Ascending aorta (tissue), 2 donors: ENCODE measurements at regions of chr2 and their contacts with region 1.

Region 1: DNA sequence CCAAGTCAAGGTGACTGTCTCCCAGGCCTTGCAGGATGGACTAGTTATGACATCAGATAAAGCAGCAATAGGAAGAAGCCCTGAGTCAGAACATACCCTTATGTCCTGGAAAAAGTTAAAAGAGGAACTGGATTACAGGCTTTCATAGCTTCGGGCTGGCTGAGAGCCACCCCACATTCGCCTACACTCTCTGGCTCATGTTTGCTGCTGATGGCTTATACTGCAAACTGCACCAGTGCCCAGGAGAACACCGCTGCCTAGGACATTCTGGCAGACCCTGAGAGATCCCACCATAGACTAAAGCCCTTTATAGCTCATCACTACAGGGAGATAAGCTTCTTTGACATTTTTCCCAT is 20.3 kb downstream of the SLC8A1 start:
- DNase-seq: peak in 1 of 2 donors; percentile 69
- H3K4me3 ChIP-seq: no peak overlapping the region
- H3K27ac ChIP-seq: peak overlapping the region; percentile 20 to 63
- H3K4me1 ChIP-seq: peaks cover 8 to 31% of the 10 kb centered on the region in 2 donors
- H3K27me3 ChIP-seq: no peaks in the 10 kb centered on the region
- CTCF ChIP-seq: no peak

Region 2: GRCh38 chr2:39504790-39505335 is 926.7 kb before region 1 on chr2:
- intact Hi-C with region 1: loop called (anchors 10 kb)
- DNase-seq: no peak
- H3K4me3 ChIP-seq: peak overlapping the region in 1 of 2 donors; percentile 2
- H3K27ac ChIP-seq: no peak overlapping the region
- H3K4me1 ChIP-seq: peaks cover 0 to 22% of the 10 kb centered on the region in 2 donors
- H3K27me3 ChIP-seq: no peaks in the 10 kb centered on the region
- CTCF ChIP-seq: no peak

Region 3: DNA sequence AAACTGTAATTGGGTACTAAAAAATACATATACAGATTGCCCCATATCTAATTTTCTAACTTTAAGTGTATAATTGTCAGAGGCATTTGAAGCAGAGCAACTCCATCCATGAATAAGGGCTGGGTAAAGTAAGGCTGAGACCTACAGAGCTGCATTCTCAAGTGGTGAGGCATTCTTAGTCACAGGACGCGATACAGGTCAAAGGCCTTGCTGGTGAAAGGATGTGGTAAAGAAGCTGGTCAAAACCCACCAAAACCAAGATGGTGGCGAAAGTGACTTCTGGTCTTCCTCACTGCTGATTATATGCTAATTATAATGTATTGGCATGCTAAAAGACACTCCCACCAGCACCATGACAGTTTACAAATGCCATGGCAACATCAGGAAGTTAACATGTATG is 29.7 kb before region 1 on chr2:
- intact Hi-C with region 1: loop called (anchors 5 kb)
- DNase-seq: no peak
- H3K4me3 ChIP-seq: no peak overlapping the region
- H3K27ac ChIP-seq: no peak overlapping the region
- H3K4me1 ChIP-seq: peaks cover 0 to 4% of the 10 kb centered on the region in 2 donors
- H3K27me3 ChIP-seq: no peaks in the 10 kb centered on the region
- CTCF ChIP-seq: no peak

Region 4: DNA sequence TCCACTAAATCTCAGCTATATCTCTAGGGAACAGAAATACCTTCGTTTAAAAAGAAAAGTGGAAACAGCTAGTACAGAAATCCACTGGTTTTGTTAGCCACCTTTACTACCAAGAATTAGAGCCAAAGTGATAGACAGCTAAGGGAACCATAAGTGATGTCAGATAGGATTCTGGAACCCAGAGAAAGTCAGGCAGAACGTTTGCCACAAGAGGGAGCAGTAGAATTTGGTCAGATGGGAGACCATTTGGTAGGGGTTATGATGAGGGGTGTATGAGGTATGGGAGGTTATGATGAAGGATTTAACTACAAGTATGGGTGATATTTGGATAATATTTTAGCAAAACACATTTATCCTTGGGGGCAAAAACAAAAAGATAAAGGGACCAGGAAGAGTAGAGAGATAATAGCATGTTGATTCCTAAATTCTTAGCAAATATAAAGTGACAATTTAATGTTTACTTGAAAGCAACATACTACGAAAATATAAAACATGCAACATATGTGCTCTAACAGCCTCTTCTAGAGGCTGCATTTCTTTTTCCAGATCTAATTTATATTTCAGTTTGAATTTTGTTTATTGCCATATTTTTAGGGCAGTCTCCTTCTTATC is 17.0 kb after region 1 on chr2:
- intact Hi-C with region 1: loop called (anchors 2 kb)
- DNase-seq: no peak
- H3K4me3 ChIP-seq: no peak overlapping the region
- H3K27ac ChIP-seq: no peak overlapping the region
- H3K4me1 ChIP-seq: peaks cover 2 to 7% of the 10 kb centered on the region in 2 donors
- H3K27me3 ChIP-seq: no peaks in the 10 kb centered on the region
- CTCF ChIP-seq: peak; percentile 14 to 52 (median 14)